ENCODE measurements at regions of chr11 and their contacts with region 1.

Region 1: GRCh38 chr11:62591448-62592145 is at the start of gene TUT1:
- DNase-seq: peak; percentile 83
- ATAC-seq: peak; percentile 85
- H3K4me3 Mint-ChIP-seq: peak within 1 kb of the TSS; percentile 97
- H3K27ac Mint-ChIP-seq: peak within 1 kb of the TSS; percentile 98
- H3K4me1 Mint-ChIP-seq: peaks cover 52% of the 10 kb centered on the region
- H3K27me3 Mint-ChIP-seq: no peaks in the 10 kb centered on the region
- CTCF ChIP-seq: no peak
- total RNA-seq, gene TUT1: 27.8 and 30.9 TPM in 2 replicates

Region 2: DNA sequence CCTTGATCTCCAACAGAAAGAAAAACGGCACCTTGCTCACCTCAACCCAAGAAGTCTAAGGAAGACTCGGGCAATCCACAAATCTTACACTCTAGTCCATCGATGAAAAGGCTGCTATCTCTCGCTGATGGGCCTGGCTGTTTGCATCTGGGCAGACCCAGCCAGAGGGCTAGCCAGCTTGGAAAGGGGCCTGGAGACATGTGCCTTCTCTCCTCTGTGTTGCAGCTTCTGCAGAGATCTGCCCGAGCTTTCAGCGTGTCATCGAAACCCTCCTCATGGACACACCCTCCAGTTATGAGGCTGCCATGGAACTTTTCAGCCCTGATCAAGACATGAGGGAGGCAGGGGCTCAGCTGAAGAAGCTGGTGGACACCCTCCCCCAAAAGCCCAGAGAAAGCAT is 169.6 kb before region 1 on chr11:
- CTCF ChIA-PET with region 1: interaction called, 23 read pairs
- POLR2A ChIA-PET with region 1: interaction called, 13 read pairs
- intact Hi-C with region 1: loop called (anchors 1 kb)
- DNase-seq: no peak
- ATAC-seq: no peak
- H3K4me3 Mint-ChIP-seq: no peak overlapping the region
- H3K27ac Mint-ChIP-seq: no peak overlapping the region
- H3K4me1 Mint-ChIP-seq: peaks cover 6% of the 10 kb centered on the region
- H3K27me3 Mint-ChIP-seq: peaks cover 2% of the 10 kb centered on the region
- CTCF ChIP-seq: no peak

Region 3: DNA sequence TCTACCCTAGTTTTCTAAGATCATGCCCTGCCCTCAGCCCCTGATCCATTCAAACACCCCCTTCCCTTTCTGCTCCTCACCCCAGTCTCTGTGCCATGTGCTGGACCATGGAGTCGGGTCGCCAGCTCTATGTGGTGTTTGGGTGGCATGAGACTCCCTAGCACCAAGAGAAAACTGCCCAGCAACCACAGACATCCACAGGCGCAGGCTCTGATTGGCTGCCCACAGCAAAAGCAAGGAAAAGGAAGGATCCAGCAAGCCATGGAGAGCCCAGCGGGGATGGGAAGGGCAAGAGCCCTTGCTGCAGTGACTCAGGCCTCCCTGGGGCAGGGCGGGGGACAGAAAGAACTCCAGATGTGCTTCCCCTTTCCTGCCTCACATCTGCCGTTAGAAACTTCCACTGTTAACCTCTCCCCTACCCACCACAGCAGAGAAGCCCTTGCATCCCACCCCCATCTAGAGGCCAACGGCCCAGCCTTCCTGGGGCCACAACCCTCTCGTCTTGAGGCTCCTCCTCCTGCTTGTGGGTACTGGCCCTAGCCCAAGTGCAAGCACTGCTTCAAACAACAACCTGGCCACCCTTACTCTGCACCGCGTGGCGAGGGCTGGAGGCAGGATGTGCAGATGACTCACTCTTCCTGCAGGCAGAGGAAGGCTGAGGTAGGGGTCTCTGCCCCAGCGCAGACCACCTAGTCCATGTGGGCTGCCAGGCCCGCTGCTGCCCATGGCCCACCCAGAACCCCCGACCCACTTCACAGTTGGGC is 35.3 kb before region 1 on chr11:
- CTCF ChIA-PET with region 1: interaction called, 5 read pairs
- POLR2A ChIA-PET with region 1: interaction called, 40 read pairs
- intact Hi-C with region 1: loop called (anchors 1 kb)
- DNase-seq: peak; percentile 64
- ATAC-seq: peak; percentile 35
- H3K4me3 Mint-ChIP-seq: peak overlapping the region; percentile 81
- H3K27ac Mint-ChIP-seq: peak overlapping the region; percentile 99
- H3K4me1 Mint-ChIP-seq: peaks cover 87% of the 10 kb centered on the region
- H3K27me3 Mint-ChIP-seq: no peaks in the 10 kb centered on the region
- CTCF ChIP-seq: no peak

Region 4: GRCh38 chr11:62645956-62646824 is 54.6 kb after region 1 on chr11 and contains the start of gene GANAB:
- CTCF ChIA-PET with region 1: no interaction called
- POLR2A ChIA-PET with region 1: interaction called, 41 read pairs
- intact Hi-C with region 1: loop called (anchors 1 kb)
- DNase-seq: peak; percentile 89
- ATAC-seq: peak; percentile 99
- H3K4me3 Mint-ChIP-seq: peak within 1 kb of the TSS; percentile 93
- H3K27ac Mint-ChIP-seq: peak within 1 kb of the TSS; percentile 86
- H3K4me1 Mint-ChIP-seq: peaks cover 34% of the 10 kb centered on the region
- H3K27me3 Mint-ChIP-seq: no peaks in the 10 kb centered on the region
- CTCF ChIP-seq: no peak
- total RNA-seq, gene GANAB: 187 and 189 TPM in 2 replicates

Region 5: GRCh38 chr11:62678770-62679696 is 87.4 kb after region 1 on chr11 and contains the start of gene UBXN1:
- CTCF ChIA-PET with region 1: interaction called, 4 read pairs
- POLR2A ChIA-PET with region 1: interaction called, 11 read pairs
- intact Hi-C with region 1: no loop called
- DNase-seq: peak; percentile 77
- ATAC-seq: peak; percentile 74
- H3K4me3 Mint-ChIP-seq: peak within 1 kb of the TSS; percentile 91
- H3K27ac Mint-ChIP-seq: peak within 1 kb of the TSS; percentile 96
- H3K4me1 Mint-ChIP-seq: peaks cover 41% of the 10 kb centered on the region
- H3K27me3 Mint-ChIP-seq: no peaks in the 10 kb centered on the region
- CTCF ChIP-seq: no peak
- total RNA-seq, gene UBXN1: 204 and 205 TPM in 2 replicates

Region 6: DNA sequence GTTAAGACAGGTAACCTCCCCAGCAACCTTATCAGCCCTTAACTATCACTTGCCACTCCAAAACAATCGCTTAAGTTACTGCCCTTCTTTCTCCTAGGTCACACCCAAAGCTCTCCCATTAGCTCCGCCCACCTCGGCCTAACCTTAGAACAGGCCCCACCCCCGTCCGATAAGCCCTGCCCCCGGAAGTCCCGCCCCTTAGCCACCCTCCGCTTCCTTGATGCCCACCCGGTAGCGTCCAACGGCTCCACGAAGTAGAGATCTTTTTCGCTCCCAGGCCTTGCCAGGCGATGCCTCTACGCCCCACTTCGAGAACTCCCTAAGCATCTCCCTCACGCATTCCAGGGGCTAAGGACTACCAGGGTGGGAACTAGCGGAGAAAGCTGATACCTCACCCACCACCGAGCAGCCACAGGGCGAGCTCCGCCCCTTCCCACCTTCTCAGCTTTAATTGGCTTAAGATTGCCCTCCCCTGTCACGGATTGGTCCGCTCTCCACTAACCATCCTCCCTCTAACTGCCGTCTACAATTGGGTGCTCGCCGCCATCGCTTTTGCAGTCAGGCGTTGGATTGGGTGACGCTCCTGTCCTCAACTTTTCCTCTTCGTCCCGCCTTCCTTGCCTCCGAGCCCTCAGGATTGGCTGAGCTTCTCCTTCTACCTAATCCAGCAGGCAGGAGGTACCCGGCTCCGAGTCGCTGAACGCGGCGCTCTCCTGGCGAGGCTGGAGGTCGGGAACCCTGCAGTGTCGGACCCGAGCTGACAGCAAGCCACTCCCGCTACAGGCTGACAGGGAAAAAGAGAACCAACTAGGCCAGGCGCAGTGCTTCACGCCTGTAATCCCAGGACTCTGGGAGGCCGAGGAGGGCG is 162.4 kb after region 1 on chr11 and contains the start of gene ZBTB3:
- CTCF ChIA-PET with region 1: no interaction called
- POLR2A ChIA-PET with region 1: interaction called, 24 read pairs
- intact Hi-C with region 1: no loop called
- DNase-seq: peak; percentile 91
- ATAC-seq: peak; percentile 93
- H3K4me3 Mint-ChIP-seq: peak within 1 kb of the TSS; percentile 97
- H3K27ac Mint-ChIP-seq: peak within 1 kb of the TSS; percentile 99
- H3K4me1 Mint-ChIP-seq: peaks cover 22% of the 10 kb centered on the region
- H3K27me3 Mint-ChIP-seq: no peaks in the 10 kb centered on the region
- CTCF ChIP-seq: no peak
- total RNA-seq, gene ZBTB3: 17.6 and 19.9 TPM in 2 replicates

Region 7: DNA sequence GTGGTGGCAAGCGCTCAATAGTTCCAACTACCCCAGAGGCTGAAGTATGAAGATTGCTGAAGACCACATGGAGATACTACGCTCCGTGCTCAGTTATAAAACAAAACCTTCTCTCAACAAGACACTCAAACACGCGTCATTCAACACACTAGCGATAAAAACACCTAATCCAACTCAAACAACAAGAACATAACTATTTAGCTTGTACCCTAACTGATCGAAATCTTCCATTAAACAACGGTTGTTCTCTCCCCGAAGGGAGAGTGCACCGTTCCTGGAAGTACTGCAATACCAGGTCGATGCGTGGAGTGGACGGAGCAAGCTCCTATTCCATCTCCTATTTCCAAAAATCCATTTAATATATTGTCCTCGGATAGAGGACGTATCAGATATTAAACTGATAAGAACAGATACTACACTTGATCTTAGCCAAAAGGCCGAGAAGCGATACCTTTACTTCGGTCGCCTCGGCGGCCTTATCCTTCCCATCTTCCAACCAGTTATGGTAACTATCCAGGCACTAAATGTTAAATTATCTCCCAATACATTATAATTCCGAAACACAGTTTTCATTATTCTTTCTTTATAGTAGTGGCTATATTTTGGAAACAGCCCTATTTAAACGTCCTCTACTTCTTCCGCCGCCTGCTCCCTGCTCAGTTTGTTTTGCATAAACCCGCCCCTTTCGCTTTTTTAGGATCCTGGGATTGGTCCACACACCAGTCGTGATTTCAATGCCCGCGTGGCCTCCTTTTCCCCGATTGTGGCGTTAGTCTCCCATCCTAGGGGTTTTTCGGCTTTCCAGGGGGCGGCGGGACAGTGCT is 250.0 kb after region 1 on chr11:
- CTCF ChIA-PET with region 1: interaction called, 3 read pairs
- POLR2A ChIA-PET with region 1: interaction called, 91 read pairs
- intact Hi-C with region 1: no loop called
- DNase-seq: peak; percentile 79
- ATAC-seq: peak; percentile 72
- H3K4me3 Mint-ChIP-seq: no peak overlapping the region
- H3K27ac Mint-ChIP-seq: no peak overlapping the region
- H3K4me1 Mint-ChIP-seq: peaks cover 28% of the 10 kb centered on the region
- H3K27me3 Mint-ChIP-seq: no peaks in the 10 kb centered on the region
- CTCF ChIP-seq: no peak